Vagina (tissue), 2 donors: ENCODE measurements at regions of chr17 and their contacts with region 1.

Region 1: DNA sequence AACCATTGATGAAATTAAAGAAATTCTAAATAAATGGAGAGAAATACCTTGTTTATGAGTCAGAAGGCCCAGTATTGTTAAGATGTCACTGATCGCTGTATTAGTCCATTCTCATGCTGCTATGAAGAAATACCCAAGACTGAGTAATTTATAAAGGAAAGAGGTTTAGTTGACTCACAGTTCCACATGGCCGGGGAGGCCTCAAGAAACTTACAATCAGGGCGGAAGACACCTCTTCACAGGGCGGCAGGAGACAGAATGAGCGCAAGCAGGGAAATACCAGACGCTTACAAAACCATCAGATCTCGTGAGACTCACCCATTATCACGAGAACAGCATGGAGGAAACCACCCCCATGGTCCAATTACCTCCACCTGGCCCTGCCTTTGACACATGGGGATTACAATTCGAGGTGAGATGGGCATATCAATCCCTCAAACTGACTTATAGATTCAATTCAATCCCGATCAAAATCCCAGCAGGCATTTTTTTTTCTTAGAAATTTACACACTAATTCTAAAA is 157.2 kb downstream of the ENGASE start:
- DNase-seq: no peak
- H3K4me3 ChIP-seq: no peak overlapping the region
- H3K27ac ChIP-seq: no peak overlapping the region
- H3K4me1 ChIP-seq: no peaks in the 10 kb centered on the region
- H3K27me3 ChIP-seq: no peaks in the 10 kb centered on the region
- CTCF ChIP-seq: no peak
- POLR2A ChIP-seq: no peak

Region 2: DNA sequence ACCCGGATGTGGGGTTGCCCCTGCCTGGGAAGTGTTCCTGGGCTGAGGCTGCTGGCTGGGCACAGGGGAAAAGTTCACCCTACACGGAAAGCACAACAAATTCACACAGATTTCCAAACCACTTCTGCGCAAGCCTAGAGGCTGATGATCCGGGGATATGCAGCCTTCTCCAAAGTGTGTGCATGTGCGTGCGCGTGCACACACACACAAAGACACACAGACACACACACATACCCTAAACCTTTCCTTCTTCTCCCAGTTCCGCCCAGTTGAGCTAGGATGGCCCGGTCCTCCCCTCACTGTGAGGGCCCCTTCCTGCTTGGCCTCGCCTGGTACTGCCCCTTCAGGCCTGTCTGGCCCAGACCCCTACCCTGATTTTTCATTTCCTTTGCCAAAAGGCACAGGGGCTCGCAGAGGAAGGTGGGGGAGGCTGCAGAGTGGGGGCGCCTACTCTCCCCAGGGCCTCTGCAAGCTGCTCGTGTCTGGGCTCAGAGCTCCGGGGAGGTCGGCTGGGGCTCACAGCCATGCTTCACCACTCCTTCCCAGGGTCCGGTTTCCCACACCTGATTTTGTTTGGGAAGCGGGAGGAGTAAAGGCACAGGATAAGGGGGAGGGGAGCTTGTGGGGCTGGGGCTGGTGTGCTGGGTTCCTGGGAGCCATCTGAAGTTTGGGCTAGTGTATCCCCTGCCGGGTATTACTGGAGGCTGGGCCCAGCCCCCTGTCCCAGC is 12.5 kb before region 1 on chr17:
- intact Hi-C with region 1: loop called (anchors 1 kb)
- DNase-seq: no peak
- H3K4me3 ChIP-seq: no peak overlapping the region
- H3K27ac ChIP-seq: no peak overlapping the region
- H3K4me1 ChIP-seq: peaks cover 5% of the 10 kb centered on the region
- H3K27me3 ChIP-seq: no peaks in the 10 kb centered on the region
- CTCF ChIP-seq: no peak
- POLR2A ChIP-seq: no peak